ENCODE measurements at regions of chr21 and their contacts with region 1.

Region 1: DNA sequence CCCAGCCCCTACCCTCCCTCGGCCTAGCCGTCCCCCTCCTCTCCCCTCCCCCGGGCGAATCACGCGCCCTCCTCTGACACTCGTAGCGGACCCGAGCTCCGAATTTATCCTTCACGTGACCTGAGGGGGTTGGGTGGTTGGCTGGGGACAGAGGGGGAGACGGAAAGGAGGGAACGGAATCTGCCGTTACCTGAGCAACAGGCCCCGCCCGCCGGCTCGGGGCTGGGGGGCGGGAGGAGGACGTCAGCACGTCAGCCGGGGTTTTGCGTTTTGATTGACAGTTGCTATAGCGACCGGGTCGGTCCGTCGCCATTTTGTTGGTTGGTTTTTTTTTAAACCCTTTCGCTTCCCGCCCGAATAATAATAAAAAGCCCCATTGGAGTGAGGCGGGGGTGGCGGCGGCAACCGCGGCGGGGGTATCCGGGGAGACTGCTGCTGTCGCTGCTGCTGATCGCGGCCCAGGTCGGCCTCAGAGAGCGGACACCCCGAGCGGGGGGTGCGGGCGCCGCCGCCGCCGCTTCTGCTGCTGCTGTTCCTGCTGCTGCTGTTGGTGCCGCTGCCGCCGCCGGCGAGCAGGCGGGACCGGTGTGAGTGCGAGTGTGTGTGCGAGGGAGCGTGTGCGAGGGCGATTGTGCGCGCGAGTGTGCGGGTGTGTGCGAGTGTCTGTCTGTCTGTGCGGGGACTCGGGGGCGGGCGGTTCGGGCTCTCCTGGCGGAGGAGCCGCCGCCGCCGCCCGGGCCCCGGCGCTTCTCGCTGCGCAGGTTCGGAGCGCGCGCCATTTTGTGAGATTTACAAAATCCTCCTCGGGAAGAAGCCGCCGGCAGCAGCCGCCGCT is at the start of gene DYRK1A:
- DNase-seq: peak; percentile 98
- H3K4me3 ChIP-seq: peak within 1 kb of the TSS; percentile 86
- H3K27ac ChIP-seq: peak within 1 kb of the TSS; percentile 90
- H3K4me1 ChIP-seq: peaks cover 38% of the 10 kb centered on the region
- CTCF ChIP-seq: no peak
- total RNA-seq, gene DYRK1A: 46.3 and 58.4 TPM in 2 replicates

Region 2: GRCh38 chr21:36989699-36990507 is 376.8 kb before region 1 on chr21:
- CTCF ChIA-PET with region 1: no interaction called
- POLR2A ChIA-PET with region 1: no interaction called
- intact Hi-C with region 1: no loop called
- DNase-seq: peak; percentile 84
- H3K4me3 ChIP-seq: peak overlapping the region; percentile 70
- H3K27ac ChIP-seq: no peak overlapping the region
- H3K4me1 ChIP-seq: peaks cover 12% of the 10 kb centered on the region
- CTCF ChIP-seq: peak; percentile 78

Region 3: GRCh38 chr21:37072988-37073416 is 293.7 kb before region 1 on chr21 and contains the starts of genes PIGP and TTC3:
- CTCF ChIA-PET with region 1: no interaction called
- POLR2A ChIA-PET with region 1: no interaction called
- intact Hi-C with region 1: loop called (anchors 2 kb)
- DNase-seq: peak; percentile 93
- H3K4me3 ChIP-seq: peak within 1 kb of the TSS; percentile 80
- H3K27ac ChIP-seq: peak within 1 kb of the TSS; percentile 55
- H3K4me1 ChIP-seq: peaks cover 32% of the 10 kb centered on the region
- CTCF ChIP-seq: no peak
- total RNA-seq, gene PIGP: 3.7 and 7.4 TPM in 2 replicates
- total RNA-seq, gene TTC3: 73.5 and 92.1 TPM in 2 replicates

Region 4: DNA sequence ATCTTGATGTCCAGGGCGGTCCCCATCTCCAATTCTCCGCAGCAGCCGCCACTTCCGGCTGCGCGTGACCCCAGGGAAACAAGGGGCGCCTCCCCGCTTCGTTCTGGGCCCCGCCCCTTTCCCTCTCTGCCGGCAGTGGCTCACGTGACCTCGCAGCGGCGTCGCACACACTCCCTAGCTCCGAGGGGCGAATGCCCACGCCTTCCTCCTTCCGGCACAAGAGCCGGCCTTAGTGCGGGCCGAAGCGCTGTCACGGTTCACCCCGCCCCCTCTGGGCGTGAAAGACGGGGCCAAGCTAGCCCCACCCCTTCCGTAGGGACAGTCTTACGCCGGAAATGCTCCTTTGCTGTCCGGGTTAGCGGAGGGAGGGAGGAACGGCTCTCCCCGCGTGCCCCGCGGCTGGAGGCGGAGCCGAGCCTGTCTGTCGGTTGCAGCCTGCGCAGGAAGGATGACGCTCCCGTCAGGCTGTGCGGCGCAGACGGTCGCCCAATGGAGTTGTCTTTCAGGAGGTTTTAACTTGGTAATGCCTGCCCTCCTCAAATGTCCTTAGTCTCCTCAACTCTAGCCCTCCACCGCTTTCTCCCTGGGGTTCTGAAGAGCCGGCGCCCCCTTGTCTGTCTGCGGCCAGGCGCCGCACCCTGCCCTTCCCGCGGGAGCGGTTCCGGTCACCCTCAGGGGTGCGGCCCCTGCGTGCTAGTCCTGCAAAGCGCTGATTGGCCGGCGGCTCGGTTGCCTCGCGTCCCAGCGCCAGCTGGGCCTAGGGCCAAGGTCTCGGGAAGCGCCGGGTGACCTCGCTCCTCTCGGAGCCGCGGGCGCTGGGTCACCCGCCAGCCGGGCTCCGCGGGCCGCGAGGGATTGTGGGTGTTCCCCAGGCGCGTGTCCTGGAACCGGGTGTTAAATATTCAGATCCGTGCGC is 99.2 kb before region 1 on chr21 and contains the start of gene VPS26C:
- CTCF ChIA-PET with region 1: no interaction called
- POLR2A ChIA-PET with region 1: interaction called, 3 read pairs
- intact Hi-C with region 1: loop called (anchors 1 kb)
- DNase-seq: peak; percentile 99
- H3K4me3 ChIP-seq: peak within 1 kb of the TSS; percentile 79
- H3K27ac ChIP-seq: peak within 1 kb of the TSS; percentile 90
- H3K4me1 ChIP-seq: peaks cover 26% of the 10 kb centered on the region
- CTCF ChIP-seq: no peak
- total RNA-seq, gene VPS26C: 33.0 and 39.7 TPM in 2 replicates

Region 5: DNA sequence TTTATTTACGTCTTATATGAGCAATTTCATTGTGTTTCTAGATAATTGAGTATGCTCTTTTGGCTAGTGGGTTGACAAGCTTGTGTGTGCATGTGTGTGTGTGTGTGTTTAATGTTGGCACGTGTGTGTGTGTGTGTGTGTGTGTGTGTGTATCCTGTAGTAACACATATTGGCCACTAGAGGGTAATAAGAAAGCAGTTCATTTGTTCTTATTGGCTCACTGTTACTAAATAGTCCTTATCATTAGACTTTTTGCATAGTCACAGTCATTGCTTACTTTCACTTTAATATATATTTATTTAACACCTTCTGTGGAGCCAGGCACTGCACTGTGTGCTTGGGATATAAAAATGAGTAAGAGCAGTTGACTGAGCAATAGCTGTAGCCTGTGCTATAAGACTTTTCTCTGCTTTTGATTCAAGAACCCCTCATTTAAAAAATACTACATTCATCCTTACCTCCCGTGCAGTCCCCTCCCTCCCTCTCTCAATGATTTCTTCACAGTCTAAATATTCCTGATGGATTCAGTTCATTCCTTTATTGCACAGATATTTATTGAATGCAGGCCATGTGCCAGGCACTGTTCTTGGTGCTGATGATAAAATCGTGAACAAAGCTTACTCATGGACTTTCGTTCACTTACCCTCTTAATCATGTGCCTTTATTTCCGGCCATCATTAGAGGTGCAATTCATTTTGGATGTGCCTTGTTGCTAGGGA is 96.5 kb after region 1 on chr21:
- CTCF ChIA-PET with region 1: no interaction called
- POLR2A ChIA-PET with region 1: interaction called, 3 read pairs
- intact Hi-C with region 1: loop called (anchors 5 kb)
- DNase-seq: peak; percentile 55
- H3K4me3 ChIP-seq: no peak overlapping the region
- H3K27ac ChIP-seq: no peak overlapping the region
- H3K4me1 ChIP-seq: peaks cover 43% of the 10 kb centered on the region
- CTCF ChIP-seq: peak; percentile 81

Measured in OCI-LY7 (cell line).